ENCODE measurements at regions of chr2 and their contacts with region 1.

Region 1: DNA sequence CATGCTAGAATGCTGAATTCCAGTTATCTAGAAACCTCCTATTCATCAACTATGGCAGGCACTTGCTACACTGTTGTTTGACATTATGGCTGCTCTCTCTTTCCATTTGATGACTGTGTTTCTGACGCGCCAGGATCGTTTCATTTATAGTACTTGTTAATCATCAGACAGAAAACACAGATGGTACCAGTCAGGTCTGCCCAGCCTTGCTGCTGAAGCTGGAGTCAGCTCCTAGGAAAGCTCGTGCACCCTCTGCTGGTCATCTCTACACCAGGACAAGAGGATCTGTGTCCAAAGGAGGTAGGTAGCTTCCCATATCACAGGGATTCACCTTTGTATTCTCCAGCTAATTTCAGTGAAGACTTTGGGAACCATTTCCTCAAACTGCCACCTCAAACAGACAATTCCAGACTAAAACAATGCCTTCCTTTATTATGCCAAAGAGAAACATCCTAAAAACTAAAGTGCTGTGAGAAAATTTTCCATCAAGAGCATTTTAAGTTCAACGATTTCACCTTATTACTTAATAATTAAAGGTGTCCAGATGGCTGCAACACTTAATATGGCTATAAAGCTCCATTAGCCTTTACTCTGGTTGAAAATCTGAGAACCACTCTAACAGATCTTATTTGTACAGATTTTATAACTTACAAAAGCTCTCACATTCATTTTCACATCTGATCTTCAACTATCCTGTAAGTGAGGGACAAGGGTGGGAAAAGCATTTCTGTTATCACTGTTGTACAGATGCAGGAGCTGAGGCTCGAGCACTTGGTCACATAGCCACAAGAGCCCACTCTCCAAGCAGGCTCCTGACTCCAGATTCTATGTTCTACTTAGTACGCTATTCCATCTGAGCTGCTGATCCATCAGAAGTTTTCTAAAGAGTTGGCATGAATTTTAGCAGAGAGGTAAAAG is 17.5 kb downstream of the METTL8 start:
- DNase-seq: peak; percentile 73 to 85 (median 78)
- H3K4me3 ChIP-seq: no peak overlapping the region
- H3K4me3 Mint-ChIP-seq: peak overlapping the region in 3 of 8 donors; percentile 5 to 41 (median 10)
- H3K27ac ChIP-seq: no peak overlapping the region
- H3K27ac Mint-ChIP-seq: peak overlapping the region; percentile 19 to 92 (median 54)
- H3K4me1 ChIP-seq: peaks cover 10% of the 10 kb centered on the region
- H3K4me1 Mint-ChIP-seq: peaks cover 10 to 18% (median 11%) of the 10 kb centered on the region in 4 donors
- H3K27me3 ChIP-seq: no peaks in the 10 kb centered on the region
- H3K27me3 Mint-ChIP-seq: no peaks in the 10 kb centered on the region

Region 2: DNA sequence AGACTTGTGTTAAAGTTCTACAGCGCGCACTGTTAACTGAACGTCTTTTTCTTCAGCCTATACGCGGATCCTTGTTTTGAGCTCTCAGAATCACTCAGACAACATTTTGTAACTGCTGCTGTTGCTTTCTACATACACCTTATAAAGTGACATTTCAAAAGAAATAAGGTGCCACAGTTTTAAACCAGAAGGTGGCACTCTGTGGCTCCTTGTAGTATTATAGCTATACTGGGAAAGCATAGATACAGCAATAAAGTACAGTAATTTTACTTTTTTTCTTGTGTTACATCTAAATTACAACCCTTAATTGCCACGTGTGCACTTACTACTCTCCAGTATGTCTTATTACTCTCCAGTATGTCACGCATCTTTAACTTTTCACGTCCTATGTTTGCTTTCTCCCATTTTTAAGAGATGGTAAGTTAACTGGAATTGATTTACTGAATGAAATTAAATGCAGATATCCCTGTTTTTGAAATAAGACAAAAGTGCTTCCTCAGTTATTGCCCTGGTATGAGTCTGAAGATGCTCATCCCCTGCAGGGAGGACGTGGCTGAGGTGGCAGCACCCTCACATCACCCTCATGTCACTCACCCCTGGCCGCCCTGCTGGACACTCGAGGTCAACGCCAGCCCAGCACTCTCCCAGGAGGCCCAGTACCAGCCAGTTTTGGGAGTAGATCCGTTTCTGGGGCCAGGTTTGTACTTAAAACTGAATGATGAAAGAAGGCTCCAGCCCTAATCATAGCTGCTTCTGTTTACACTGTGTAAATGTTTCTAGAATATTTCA is 449.4 kb before region 1 on chr2:
- CTCF ChIA-PET with region 1: interaction called, 135 read pairs
- POLR2A ChIA-PET with region 1: no interaction called
- intact Hi-C with region 1: no loop called
- DNase-seq: no peak
- H3K4me3 ChIP-seq: no peak overlapping the region
- H3K4me3 Mint-ChIP-seq: no peak overlapping the region
- H3K27ac ChIP-seq: no peak overlapping the region
- H3K27ac Mint-ChIP-seq: peak overlapping the region in 1 of 7 donors; percentile 29
- H3K4me1 ChIP-seq: no peaks in the 10 kb centered on the region
- H3K4me1 Mint-ChIP-seq: peaks cover 0 to 4% (median 0%) of the 10 kb centered on the region in 4 donors
- H3K27me3 ChIP-seq: no peaks in the 10 kb centered on the region
- H3K27me3 Mint-ChIP-seq: no peaks in the 10 kb centered on the region

Region 3: DNA sequence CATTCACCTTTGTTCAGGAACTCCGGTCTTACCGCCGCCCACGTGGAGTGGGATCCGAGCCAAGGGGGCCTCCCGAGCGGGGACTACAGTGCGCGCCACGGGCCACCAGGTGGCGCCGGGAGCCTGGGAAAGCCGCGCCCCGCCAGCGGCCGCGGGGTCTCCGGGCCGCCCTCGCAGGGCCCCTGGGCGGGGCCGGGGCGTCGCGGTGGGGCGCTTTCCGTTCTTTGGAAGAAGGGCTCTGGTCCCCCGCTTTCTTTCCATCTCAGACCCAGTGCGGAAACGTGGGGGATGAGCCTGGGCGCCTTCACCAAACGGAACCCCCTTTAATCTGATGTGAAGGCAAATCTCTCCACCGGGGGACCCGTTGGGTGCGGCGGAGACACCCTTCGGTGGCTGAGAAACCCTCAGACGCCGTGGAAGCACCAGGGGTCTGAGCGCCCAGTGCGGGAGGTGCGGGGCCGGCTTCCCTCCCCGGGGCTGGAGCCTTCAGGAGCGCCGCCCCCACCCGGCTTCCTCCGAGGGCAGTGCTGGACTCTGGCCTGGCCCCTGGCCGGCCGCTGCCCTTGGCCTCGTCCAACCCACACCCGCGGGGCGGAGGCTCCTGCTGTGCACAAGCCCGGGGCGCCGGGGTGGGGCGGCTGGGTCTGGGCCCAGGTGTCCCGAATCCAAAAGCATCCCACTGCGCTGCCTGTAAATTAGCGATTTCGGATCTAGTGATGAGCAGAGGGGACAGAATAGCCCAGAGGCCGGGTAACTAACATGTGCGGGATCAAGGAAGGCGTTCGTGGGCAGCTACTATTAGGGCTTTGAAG is 442.6 kb before region 1 on chr2:
- CTCF ChIA-PET with region 1: interaction called, 135 read pairs
- POLR2A ChIA-PET with region 1: interaction called, 12 read pairs
- intact Hi-C with region 1: loop called (anchors 1 kb)
- DNase-seq: peak; percentile 87 to 91 (median 87)
- H3K4me3 ChIP-seq: peak overlapping the region; percentile 26 to 77
- H3K4me3 Mint-ChIP-seq: peak overlapping the region; percentile 81 to 88 (median 84)
- H3K27ac ChIP-seq: peak overlapping the region; percentile 52
- H3K27ac Mint-ChIP-seq: peak overlapping the region; percentile 25 to 90 (median 54)
- H3K4me1 ChIP-seq: peaks cover 14% of the 10 kb centered on the region
- H3K4me1 Mint-ChIP-seq: peaks cover 7 to 16% (median 10%) of the 10 kb centered on the region in 4 donors
- H3K27me3 ChIP-seq: no peaks in the 10 kb centered on the region
- H3K27me3 Mint-ChIP-seq: no peaks in the 10 kb centered on the region

Region 4: DNA sequence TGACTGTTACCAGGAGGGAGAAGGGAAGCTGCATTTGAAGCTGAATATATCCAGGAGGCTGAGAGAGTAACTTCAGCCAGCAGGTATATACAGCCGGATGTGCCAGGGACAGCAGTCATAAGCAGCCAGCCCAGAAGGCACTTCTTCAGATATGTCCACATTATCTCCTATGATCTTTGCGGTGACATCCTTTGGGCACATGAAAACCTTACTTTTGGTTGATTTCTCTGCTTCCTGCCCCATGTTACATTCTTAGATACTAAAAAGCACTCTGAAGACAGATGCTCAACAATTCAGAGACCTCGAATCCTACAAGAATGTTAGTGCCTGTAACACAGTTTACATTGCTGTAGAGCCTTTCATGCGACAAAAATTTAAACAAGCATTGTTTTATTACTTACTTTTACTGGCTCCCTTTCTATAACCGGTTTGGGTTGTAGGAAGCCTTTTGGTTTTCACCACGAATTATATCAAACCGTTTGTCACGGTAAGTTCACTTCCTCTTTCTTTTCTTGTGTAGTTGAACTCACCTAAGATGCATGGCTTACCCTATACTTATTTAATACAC is 205.3 kb before region 1 on chr2:
- CTCF ChIA-PET with region 1: interaction called, 4 read pairs
- POLR2A ChIA-PET with region 1: no interaction called
- intact Hi-C with region 1: loop called (anchors 1 kb)
- DNase-seq: peak; percentile 56 to 76 (median 67)
- H3K4me3 ChIP-seq: peak overlapping the region in 1 of 2 donors; percentile 46
- H3K4me3 Mint-ChIP-seq: peak overlapping the region; percentile 73 to 87 (median 78)
- H3K27ac ChIP-seq: peak overlapping the region; percentile 36
- H3K27ac Mint-ChIP-seq: peak overlapping the region; percentile 62 to 90 (median 85)
- H3K4me1 ChIP-seq: peaks cover 17% of the 10 kb centered on the region
- H3K4me1 Mint-ChIP-seq: peaks cover 11 to 26% (median 15%) of the 10 kb centered on the region in 4 donors
- H3K27me3 ChIP-seq: no peaks in the 10 kb centered on the region
- H3K27me3 Mint-ChIP-seq: no peaks in the 10 kb centered on the region

Region 5: DNA sequence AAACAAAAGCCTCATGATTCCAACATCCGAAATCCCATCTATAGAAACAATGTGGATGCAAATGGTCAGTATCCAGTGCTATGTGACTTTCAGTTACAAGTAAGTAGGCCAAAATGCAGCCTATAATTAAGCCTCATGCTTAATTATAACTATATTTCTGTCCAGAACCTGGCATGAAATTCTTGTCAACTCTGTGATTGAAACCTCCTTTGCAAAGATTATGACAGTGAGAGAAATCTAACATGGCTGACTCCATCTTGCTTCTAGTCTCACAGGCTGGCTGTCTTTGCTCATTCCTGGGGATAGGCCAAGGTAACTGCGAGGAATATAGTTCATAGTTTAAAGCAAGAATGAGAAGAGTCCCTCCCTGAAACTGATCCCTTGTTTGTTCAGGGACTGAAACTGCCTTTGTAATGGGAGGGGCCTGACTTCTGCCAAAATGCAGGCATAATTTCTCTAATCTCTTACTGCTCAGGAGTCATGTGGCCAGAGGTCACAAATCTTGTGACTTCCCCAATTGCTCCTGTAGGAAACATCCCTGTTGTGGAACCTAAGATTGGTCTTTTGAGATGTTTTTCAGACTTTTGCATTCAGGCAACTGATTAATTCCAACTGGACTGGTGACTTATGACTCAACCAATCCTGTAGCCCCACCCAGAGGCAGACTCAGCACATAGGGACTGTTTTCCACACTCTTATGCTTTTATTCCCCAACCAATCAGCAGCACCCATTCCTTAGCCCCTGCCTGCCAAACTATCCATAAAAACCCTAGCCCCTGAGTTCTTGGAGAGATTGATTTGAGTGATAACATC is 171.1 kb before region 1 on chr2:
- CTCF ChIA-PET with region 1: interaction called, 6 read pairs
- POLR2A ChIA-PET with region 1: interaction called, 3 read pairs
- intact Hi-C with region 1: loop called (anchors 10 kb)
- DNase-seq: no peak
- H3K4me3 ChIP-seq: no peak overlapping the region
- H3K4me3 Mint-ChIP-seq: peak overlapping the region in 1 of 8 donors; percentile 21
- H3K27ac ChIP-seq: no peak overlapping the region
- H3K27ac Mint-ChIP-seq: peak overlapping the region in 2 of 7 donors; percentile 3 to 23
- H3K4me1 ChIP-seq: peaks cover 44% of the 10 kb centered on the region
- H3K4me1 Mint-ChIP-seq: peaks cover 39 to 59% (median 44%) of the 10 kb centered on the region in 4 donors
- H3K27me3 ChIP-seq: no peaks in the 10 kb centered on the region
- H3K27me3 Mint-ChIP-seq: no peaks in the 10 kb centered on the region

Region 6: GRCh38 chr2:171325886-171326585 is 90.2 kb before region 1 on chr2:
- CTCF ChIA-PET with region 1: interaction called, 7 read pairs
- POLR2A ChIA-PET with region 1: no interaction called
- intact Hi-C with region 1: loop called (anchors 5 kb)
- DNase-seq: peak in 4 of 5 donors; percentile 41 to 69 (median 54)
- H3K4me3 ChIP-seq: no peak overlapping the region
- H3K4me3 Mint-ChIP-seq: peak overlapping the region; percentile 33 to 82 (median 72)
- H3K27ac ChIP-seq: peak overlapping the region; percentile 44
- H3K27ac Mint-ChIP-seq: peak overlapping the region; percentile 58 to 93 (median 89)
- H3K4me1 ChIP-seq: peaks cover 36% of the 10 kb centered on the region
- H3K4me1 Mint-ChIP-seq: peaks cover 25 to 59% (median 41%) of the 10 kb centered on the region in 4 donors
- H3K27me3 ChIP-seq: no peaks in the 10 kb centered on the region
- H3K27me3 Mint-ChIP-seq: no peaks in the 10 kb centered on the region

Region 7: GRCh38 chr2:171433763-171434670 is 17.7 kb after region 1 on chr2 and contains the starts of genes DCAF17 and METTL8:
- CTCF ChIA-PET with region 1: interaction called, 18 read pairs
- POLR2A ChIA-PET with region 1: interaction called, 12 read pairs
- intact Hi-C with region 1: loop called (anchors 1 kb)
- DNase-seq: peak; percentile 92 to 95 (median 94)
- H3K4me3 ChIP-seq: peak within 1 kb of the TSS; percentile 40 to 82
- H3K4me3 Mint-ChIP-seq: peak within 1 kb of the TSS; percentile 84 to 92 (median 90)
- H3K27ac ChIP-seq: peak within 1 kb of the TSS; percentile 91
- H3K27ac Mint-ChIP-seq: peak within 1 kb of the TSS; percentile 79 to 98 (median 96)
- H3K4me1 ChIP-seq: peaks cover 30% of the 10 kb centered on the region
- H3K4me1 Mint-ChIP-seq: peaks cover 32 to 52% (median 40%) of the 10 kb centered on the region in 4 donors
- H3K27me3 ChIP-seq: no peaks in the 10 kb centered on the region
- H3K27me3 Mint-ChIP-seq: no peaks in the 10 kb centered on the region
- total RNA-seq, gene DCAF17: 26.6 to 30.3 TPM
- total RNA-seq, gene METTL8: 17.5 to 19.2 TPM